Left cardiac atrium (tissue), 4 donors: ENCODE measurements at regions of chr16 and their contacts with region 1.

Region 1: DNA sequence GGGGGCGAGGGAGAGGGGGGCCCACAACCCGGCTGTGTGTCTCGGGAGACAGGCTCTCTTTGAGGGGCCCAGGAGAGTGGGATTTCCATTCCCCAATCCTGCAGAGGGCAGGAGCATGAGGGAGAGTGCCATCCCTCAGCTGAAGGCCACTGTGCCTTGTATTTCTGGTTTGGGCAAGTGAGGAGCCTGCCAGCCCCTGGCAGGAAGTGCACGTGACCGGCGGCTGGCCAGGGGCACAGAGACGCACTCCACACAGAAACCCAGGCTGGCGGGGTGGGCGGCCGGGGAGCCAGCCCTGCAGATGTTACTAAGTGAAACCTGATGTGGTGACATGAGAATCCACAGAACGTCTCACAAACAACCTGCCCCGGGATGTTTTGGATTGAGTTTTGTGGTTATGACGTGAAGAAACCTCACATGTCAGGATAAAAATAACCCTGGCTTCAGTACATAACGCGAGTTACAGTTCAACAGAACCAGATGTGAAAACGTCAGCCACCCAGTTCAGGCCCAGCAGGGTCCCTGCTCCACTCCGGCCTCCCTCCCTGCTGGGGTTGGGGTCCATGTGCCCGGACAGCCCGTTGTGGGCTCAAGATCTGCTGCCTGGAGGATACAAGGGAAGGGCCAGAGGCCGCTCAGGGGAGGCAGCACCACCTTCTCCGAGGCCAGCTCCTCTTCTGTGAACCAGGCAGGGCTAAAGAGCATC is 51.7 kb upstream of the MTSS2 start:
- DNase-seq: peak; percentile 73
- ATAC-seq: peak; percentile 61 to 62

Region 2: GRCh38 chr16:70685938-70686375 is 51.6 kb before region 1 on chr16 and contains the start of gene MTSS2:
- intact Hi-C with region 1: loop called (anchors 2 to 10 kb)
- DNase-seq: peak; percentile 84
- ATAC-seq: peak; percentile 65 to 72
- total RNA-seq, gene MTSS2: 50.7 to 51.4 TPM

Region 3: DNA sequence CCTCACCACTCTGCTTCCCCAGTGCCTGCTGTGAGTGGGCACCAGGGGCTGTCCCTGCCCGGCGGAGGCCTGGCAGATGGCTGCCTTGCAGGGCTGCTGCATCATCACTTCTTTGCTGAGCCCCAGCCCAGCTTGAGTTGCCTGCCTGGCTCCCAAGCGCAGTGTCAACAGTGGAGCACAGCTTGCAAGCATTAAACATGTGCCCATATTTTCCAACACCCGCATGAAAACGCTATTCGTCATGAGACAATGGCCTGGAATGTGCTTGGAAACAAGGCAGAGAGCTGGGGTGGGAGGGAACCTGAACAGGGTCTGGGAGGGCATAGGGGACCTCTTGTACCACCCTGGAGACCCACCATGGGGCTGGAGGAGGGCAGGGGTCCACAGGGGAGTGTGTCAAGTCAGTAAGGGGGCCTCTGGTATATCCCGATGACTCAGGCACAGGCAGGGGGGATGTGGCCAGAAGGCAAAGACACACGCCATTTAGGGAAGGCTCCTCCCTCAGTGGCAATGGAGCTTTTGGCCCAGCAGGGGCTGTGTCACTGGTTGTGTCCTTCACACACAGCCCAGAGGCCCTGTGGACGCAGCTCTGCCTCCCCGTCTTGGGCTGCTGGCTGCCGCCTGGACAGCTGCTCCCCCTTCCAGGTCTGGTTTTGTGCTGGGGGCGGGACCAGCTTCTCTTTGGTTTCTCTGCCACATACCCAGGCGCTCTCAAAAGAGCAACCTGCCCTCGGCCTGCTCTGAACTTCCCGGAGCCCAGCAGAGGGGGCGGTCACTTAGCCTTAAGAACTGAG is 34.3 kb before region 1 on chr16:
- intact Hi-C with region 1: loop called in 1 of 2 experiments (anchors 5 kb)
- DNase-seq: peak; percentile 72
- ATAC-seq: peak; percentile 64 to 74

Region 4: GRCh38 chr16:70778901-70779309 is 41.4 kb after region 1 on chr16:
- intact Hi-C with region 1: no loop called
- DNase-seq: no peak
- ATAC-seq: peak; percentile 80 to 81